Activated CD8-positive, alpha-beta T cell treated with anti-CD3 and anti-CD28 coated beads, Interleukin-2, amount 10 ng/mL, durations not matched to agents 7 days and 5 days (primary cell): ENCODE measurements at regions of chr17 and their contacts with region 1.

Region 1: DNA sequence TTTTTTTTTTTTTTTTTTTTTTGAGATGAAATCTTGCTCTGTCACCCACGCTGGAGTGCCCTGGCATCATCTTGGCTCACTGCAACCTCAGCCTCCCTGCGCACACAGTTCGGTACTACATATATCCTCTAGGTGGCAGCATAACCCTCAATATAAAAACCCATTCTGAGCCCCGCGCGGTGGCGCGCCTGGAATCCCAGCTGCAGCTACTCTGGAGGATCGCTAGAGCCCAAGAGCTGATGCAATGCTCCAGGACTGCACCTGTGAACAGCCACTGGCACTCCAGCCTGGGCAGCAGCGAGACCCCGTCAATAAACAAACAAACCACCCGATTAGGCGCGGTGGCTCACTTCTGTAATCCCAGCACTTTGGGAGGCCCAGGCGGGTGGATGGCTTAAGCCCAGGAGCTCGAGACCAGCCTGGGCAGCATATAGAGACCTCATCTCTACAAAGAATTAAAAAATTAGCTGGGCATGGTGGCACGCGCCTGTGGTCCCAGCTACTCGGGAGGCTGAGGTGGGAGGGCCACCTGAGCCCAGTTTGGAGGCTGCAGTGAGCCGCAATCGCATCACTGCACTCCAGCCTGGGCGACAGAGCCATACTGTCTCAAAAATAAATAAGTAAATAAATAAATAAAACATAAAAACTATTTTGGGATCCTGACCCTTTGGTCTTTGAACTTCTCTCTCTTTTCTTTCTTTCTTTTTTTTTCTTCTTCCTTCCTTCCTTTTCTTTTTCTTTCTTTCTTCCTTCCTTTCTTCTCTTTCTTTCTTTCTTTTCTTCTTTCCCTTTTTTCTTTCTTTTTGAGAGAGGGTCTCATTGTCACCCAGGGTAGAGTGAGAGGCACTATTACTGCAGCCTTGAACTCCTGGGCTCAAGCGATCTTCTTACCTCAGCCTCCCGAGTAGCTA is 15.4 kb upstream of the AKAP10 start:
- DNase-seq: peak; percentile 82
- ATAC-seq: peak; percentile 99
- H3K4me3 Mint-ChIP-seq: peak overlapping the region; percentile 28
- H3K27ac Mint-ChIP-seq: no peak overlapping the region
- H3K4me1 Mint-ChIP-seq: peaks cover 8% of the 10 kb centered on the region
- H3K27me3 Mint-ChIP-seq: peaks cover 10% of the 10 kb centered on the region

Region 2: GRCh38 chr17:19977311-19978208 is 15.5 kb before region 1 on chr17 and contains the start of gene AKAP10:
- CTCF ChIA-PET with region 1: interaction called, 13 read pairs
- POLR2A ChIA-PET with region 1: no interaction called
- DNase-seq: peak; percentile 96
- ATAC-seq: peak; percentile 88
- H3K4me3 Mint-ChIP-seq: peak within 1 kb of the TSS; percentile 97
- H3K27ac Mint-ChIP-seq: peak within 1 kb of the TSS; percentile 99
- H3K4me1 Mint-ChIP-seq: peaks cover 44% of the 10 kb centered on the region
- H3K27me3 Mint-ChIP-seq: no peaks in the 10 kb centered on the region
- total RNA-seq, gene AKAP10: 40.8 to 40.9 TPM

Region 3: DNA sequence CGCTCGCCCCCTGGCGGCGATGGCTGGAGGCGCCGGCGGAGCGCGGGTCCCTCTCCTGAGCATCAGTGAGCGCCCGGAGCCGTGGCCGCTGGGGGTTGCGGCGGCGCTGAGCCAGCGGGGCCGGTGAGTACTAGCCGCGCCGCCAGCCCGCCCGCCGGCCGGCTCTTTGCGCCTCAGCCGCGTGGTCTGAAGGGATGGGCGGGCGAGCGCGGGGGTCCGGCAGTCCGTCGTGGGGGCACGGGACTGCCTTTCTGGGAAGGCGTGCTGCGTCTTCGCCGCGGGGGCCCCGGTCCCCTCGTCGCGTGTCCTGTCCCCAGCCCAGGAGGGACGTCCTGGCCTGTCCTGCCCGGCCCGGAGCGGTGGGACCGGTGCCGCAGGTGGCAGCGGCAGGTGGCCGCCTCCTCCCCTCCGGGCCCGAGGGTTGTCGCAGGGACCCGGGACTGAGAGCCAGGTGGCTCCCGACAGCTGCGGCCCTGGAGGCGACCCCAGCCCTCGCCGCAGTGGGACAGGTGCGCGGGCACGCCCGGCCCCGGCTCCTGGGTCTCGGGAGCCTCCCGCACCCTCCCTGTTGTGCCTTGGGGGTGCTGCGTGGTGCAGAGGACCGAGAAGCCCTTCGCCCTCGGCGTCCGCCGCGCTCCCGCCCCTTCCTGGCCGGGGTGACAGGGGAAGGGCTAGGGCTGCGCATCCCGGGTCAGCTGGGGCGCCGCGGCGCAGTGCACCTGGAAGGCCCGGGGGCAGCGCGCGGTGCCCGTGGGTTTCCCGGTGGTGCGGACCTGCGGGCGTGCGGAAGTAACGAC is 16.4 kb after region 1 on chr17 and contains the start of gene SPECC1:
- CTCF ChIA-PET with region 1: interaction called, 21 read pairs
- POLR2A ChIA-PET with region 1: no interaction called
- DNase-seq: peak; percentile 88
- ATAC-seq: peak; percentile 99
- H3K4me3 Mint-ChIP-seq: peak within 1 kb of the TSS; percentile 83
- H3K27ac Mint-ChIP-seq: peak within 1 kb of the TSS; percentile 64
- H3K4me1 Mint-ChIP-seq: peaks cover 10% of the 10 kb centered on the region
- H3K27me3 Mint-ChIP-seq: peaks cover 45% of the 10 kb centered on the region
- total RNA-seq, gene SPECC1: 4.2 to 5.3 TPM

Region 4: GRCh38 chr17:20103454-20104446 is 110.7 kb after region 1 on chr17:
- CTCF ChIA-PET with region 1: interaction called, 11 read pairs
- POLR2A ChIA-PET with region 1: no interaction called
- DNase-seq: no peak
- ATAC-seq: no peak
- H3K4me3 Mint-ChIP-seq: no peak overlapping the region
- H3K27ac Mint-ChIP-seq: no peak overlapping the region
- H3K4me1 Mint-ChIP-seq: no peaks in the 10 kb centered on the region
- H3K27me3 Mint-ChIP-seq: peaks cover 8% of the 10 kb centered on the region

Region 5: DNA sequence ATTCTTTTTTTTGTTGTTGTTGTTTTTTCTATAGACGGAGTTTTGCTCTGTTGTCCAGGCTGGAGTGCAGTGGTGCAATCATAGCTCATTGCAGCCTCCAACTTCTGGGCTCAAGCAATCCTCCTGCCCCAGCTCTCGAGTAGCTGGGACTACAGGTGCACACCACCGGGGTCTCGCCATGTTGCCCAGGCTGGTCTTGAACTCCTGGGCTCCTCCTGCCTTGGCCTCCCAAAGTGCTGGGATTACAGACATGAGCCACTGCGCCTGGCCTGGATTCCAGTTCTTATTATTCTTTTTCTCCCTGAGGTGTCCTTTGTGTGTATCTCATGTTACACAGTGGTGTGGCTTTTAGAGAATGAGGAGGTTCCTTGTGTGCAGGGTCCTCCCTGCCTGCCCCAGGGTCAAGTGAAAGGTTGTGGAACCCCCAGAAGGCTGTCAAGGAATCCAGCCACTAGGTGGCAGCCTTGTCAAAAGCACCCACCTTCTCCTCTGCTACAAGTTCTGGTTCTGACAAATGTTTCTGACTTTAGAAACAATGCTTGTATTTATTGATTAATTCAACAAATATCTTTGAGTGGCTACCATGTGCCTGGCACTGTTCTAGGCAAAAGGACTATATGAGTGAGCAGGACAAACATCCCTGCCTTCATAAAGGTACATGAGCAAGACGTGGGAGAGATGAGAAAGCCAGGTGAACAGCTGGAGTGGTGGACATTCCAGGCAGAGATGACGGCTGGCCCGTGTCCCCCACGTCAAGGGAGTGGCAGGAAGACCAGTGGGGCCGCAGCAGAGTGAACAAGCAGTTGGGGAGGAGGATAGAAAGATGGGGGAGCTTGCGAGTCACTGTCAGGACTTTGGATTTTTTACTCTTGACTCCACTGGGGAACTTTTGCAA is 128.5 kb after region 1 on chr17:
- CTCF ChIA-PET with region 1: interaction called, 38 read pairs
- POLR2A ChIA-PET with region 1: no interaction called
- DNase-seq: peak; percentile 76
- ATAC-seq: peak; percentile 75
- H3K4me3 Mint-ChIP-seq: no peak overlapping the region
- H3K27ac Mint-ChIP-seq: no peak overlapping the region
- H3K4me1 Mint-ChIP-seq: peaks cover 2% of the 10 kb centered on the region
- H3K27me3 Mint-ChIP-seq: peaks cover 9% of the 10 kb centered on the region